GM18951 (cell line): ENCODE measurements at regions of chr19 and their contacts with region 1.

Region 1: DNA sequence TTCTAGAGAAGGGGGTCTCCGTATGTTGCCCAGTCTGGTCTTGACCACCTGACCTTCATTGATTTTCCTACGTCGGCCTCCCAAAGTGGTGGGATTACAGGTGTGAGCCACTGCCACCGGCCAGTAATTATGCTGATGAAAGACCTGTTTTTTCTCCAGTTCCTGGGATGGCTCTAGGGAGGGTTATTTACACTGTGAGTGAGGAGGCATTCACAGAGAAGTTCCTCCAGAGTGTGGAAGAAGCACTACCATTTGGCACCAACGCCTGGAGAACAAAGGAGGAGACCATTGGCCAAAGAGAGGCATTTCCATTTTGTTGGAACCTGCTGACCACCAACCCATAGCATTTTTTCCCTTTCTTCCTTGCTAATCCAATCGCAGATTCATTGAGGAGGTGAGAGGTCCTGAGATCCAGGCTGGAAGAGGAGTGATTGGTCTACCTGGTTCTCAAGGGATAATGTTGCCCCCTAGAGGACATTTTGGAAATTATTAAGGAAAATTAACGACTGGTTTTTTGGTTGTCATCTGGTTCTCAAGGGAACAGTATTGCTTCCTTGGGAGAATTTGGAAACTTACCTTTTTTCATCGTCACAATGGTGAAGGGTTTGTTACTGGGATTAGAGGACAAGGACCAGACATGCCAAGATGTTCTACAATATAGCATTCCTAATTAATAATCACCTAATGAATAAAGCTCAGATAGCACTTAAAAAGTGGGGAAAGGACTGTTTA is 5.5 kb upstream of the SAE1 start:
- POLR2A ChIP-seq: no peak

Region 2: GRCh38 chr19:46542428-46543230 is 582.5 kb before region 1 on chr19:
- in situ Hi-C with region 1: no loop called
- POLR2A ChIP-seq: no peak

Region 3: DNA sequence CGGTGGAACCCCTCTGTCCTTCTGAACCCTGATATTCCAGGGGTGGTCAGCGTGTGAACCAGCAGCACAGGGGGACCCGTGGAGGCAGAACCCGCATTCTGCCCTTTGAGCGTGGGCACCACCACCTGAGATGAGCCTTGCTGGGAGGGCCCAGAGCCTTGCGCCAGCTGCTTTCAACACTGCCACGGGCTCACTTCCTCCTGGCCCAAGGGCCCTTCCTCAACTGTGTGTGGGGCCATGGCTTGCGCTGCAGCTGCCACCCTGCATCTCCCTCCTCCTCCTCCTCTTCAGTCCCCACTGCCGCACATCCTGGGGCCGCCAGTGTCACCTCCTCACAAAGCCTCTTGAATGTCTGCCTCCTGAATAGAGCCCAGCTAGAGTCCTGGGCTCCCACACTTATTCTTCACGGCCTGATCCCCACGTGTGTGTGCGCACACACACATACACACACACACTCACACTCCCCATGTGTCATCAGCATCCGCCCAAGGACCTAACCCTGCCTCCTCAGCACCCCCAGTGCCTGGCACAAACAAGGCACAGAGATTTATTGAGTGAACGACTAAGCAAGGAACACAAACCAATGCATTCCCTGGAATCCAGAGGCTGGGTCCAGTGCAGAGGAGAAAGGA is 49.8 kb before region 1 on chr19:
- in situ Hi-C with region 1: loop called (anchors 10 kb)
- POLR2A ChIP-seq: no peak